ENCODE measurements at regions of chr16 and their contacts with region 1.

Region 1: DNA sequence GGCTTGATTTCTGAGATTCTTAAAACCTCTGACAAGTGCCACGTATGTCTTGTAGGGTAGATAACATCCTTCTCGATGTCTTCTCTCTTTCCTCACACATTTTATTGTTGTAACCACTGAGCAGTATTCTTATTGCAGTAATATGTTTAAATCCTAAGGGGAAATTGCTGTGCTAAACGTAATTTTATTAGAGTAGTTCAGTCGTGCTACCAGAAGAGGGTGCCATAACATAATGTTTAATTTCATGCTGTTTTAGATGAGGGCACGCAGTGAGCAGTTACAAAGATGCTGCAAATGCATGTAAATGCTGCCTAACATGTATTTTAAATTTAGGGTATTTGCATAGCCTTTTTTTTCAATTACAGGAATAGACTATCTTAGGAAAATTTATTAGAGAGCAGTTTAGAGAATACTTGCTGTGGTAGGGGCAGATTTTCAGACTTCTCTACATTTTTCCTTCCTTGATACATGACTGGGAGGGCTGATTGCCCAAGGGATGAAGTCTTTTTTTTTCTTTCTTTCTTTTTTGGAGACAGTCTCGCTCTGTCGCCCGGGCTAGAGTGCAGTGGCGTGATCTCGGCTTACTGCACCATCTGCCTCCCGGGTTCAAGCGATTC is 51.7 kb downstream of the GAN start:
- DNase-seq: peak in 9 of 42 donors; percentile 19 to 66 (median 28)

Region 2: DNA sequence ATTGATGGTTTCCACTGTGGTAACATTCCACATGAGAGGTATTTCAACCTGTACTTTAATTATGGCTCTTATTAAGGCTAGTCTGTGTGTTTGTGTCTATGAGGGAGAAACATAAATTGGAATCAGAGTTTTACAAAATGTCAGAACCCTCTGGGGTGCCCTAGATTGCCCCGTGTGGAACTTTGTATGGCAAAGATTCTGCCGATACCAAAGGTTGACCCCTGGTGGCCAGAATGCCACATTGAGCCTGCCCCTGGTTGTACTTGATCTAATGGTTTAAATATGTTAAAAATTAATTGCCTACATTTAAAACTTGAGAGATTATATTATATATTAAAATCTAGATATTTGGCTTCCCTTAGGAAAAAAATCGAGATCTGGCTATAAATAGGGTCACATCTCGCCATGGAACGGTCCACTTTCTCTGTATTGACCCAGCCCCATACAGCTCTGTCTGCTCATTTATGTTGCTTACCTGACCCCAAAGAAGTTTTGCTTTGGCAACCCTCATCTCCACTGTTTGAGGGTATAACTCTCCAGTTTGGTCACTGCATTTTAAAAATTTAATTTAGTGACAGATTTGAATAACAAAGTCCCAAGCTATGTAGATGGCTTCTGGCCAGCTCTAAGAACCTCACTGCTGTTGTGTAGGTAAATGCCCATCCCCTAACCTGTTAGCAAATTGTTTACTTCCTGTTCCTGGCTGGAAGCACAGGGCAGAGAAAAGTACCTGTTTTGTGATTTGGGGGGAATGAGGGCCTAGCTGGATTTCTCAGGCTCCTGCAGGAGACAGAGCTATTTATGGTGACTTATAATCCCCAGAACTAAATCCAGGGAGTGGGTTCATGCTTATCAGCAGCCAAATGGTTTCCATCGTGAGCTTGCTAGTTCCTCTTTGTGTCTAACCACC is 507.7 kb after region 1 on chr16:
- intact Hi-C with region 1: loop called (anchors 5 kb)
- DNase-seq: peak in 41 of 42 donors; percentile 27 to 81 (median 56)

Measured in head of caudate nucleus (tissue), 42 donors.